Right lobe of liver (tissue), 6 donors: ENCODE measurements at regions of chr4 and their contacts with region 1.

Region 1: DNA sequence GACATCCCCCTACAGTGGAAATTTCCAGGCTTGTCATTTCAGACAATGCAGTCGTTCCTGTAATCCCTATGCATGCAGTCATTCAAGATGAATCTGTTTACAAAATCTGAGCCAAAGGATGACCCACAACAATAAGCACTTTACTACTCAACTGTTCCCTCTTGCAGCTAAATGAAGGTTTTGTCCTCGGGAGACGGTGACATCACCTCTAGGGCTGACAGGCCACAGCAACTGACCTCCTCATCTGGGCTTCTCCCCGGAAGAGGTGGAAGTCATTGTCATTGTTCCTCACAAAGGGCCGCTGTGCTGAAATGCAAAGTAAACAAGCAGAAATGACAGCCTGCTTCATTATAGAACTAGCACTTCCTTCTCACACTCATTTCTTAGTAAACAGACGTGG is 29.2 kb downstream of the CLRN2 start:
- DNase-seq: no peak
- ATAC-seq: peak in 2 of 4 donors; percentile 10 to 34
- H3K4me3 ChIP-seq: no peak overlapping the region
- H3K27ac ChIP-seq: no peak overlapping the region
- H3K4me1 ChIP-seq: no peaks in the 10 kb centered on the region
- H3K27me3 ChIP-seq: no peaks in the 10 kb centered on the region
- CTCF ChIP-seq: no peak
- POLR2A ChIP-seq: no peak

Region 2: DNA sequence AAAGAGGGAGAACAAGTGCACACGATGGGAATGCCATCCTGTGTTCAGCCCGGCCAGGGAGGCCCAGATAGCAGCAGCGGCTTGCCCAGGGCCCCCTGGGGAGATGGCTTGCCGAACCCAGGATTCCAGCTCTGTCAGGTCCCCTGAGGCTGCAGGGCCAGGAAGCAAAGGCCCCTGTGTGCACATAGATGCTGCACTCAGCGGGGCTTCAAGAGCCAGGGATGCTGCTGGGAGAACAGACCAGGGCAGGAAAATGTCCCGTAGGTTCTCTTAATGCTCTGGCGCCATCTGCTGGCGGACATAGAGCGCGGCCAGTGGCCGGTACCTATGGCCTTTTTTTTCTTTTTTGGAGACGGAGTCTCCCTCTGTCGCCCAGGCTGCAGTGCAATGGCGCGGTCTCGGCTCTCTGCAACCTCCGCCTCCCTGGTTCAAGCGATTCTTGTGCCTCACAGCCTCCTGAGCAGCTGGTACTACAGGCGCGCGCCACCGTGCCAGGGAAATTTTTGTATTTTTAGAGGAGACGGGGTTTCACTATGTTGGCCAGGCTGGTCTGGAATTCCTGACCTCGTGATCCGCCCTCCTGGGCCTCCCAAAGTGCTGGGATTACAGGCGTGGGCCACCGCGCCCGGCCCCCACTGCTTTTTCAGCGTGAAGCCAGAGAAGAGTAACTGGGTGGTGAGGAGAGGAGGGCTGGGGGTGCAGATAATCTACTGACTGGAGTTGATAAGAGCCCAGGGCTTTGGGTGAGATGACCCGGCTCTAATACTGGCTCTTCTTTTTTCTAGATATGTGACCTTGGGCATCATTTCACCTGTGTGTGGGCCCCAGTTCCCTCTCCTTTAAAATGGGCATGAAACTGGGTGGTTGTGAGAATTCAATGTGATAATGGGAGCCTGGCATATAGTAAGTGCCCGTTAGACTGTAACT is 92.8 kb after region 1 on chr4:
- intact Hi-C with region 1: loop called (anchors 10 kb)
- DNase-seq: peak; percentile 75 to 82 (median 81)
- ATAC-seq: peak; percentile 95 to 98 (median 97)
- H3K4me3 ChIP-seq: no peak overlapping the region
- H3K27ac ChIP-seq: no peak overlapping the region
- H3K4me1 ChIP-seq: no peaks in the 10 kb centered on the region
- H3K27me3 ChIP-seq: no peaks in the 10 kb centered on the region
- CTCF ChIP-seq: peak; percentile 83 to 95 (median 94)
- POLR2A ChIP-seq: no peak